ENCODE measurements at regions of chr6 and their contacts with region 1.

Region 1: DNA sequence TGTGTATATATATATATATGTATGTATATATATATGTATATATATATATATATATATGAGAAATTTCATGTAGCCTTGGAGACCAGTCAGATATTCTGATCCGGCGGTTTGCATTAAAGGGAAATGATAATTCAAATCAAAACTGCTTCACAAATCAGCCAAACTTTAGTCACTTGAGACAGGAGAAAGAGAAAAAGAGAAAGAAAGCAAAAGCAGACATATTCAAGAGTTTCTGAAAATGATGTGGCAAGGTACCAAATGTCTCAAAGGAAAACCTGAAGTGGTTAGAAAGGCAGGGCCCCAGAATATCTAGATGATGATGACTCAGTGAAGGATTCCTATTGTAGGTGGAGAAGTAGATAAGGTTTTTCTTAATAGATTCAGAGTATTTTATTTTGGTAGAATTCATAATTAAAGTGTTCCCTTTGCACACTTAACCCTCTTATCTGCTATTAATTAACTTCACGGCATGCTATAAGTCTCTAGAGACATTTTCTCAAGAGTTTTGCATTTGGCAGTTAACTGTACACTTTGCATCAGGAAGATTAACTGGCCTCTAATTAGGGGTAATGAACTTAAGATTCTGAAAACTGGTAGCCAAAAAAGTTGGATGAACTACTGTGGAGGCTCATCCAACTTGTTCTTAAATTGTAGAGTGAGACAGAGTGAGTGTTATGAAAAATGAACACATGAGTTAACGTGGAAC is 50.1 kb upstream of the ASF1A start:
- DNase-seq: no peak
- H3K4me3 ChIP-seq: no peak overlapping the region
- H3K4me3 Mint-ChIP-seq: no peak overlapping the region
- H3K27ac ChIP-seq: no peak overlapping the region
- H3K27ac Mint-ChIP-seq: peak overlapping the region in 3 of 7 donors; percentile 2 to 49 (median 36)
- H3K4me1 ChIP-seq: peaks cover 21% of the 10 kb centered on the region
- H3K4me1 Mint-ChIP-seq: peaks cover 18 to 27% (median 23%) of the 10 kb centered on the region in 4 donors
- H3K27me3 ChIP-seq: no peaks in the 10 kb centered on the region
- H3K27me3 Mint-ChIP-seq: no peaks in the 10 kb centered on the region

Region 2: DNA sequence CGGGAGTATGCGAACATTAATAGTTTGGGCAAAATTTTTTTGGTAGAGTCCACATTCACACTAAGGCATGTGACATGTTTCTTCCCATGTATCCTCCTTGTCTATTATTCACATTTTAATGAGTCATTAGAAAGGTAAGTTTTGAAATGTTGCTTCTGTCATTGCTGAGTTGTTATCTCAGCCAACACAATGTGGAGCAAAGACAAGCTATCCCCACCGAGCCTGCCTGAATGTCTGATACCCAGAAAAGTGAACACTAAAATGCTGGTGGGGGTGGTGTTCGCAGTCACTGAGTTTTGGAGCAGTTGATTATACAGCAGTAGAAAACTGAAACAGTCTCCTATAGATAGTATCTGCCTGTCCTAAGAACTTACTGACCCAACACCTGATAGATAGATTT is 18.2 kb before region 1 on chr6:
- CTCF ChIA-PET with region 1: interaction called, 10 read pairs
- POLR2A ChIA-PET with region 1: no interaction called
- intact Hi-C with region 1: no loop called
- DNase-seq: no peak
- H3K4me3 ChIP-seq: no peak overlapping the region
- H3K4me3 Mint-ChIP-seq: no peak overlapping the region
- H3K27ac ChIP-seq: no peak overlapping the region
- H3K27ac Mint-ChIP-seq: no peak overlapping the region
- H3K4me1 ChIP-seq: no peaks in the 10 kb centered on the region
- H3K4me1 Mint-ChIP-seq: peaks cover 0 to under 1% (median under 1%) of the 10 kb centered on the region in 4 donors
- H3K27me3 ChIP-seq: no peaks in the 10 kb centered on the region
- H3K27me3 Mint-ChIP-seq: no peaks in the 10 kb centered on the region

Measured in CD4-positive, alpha-beta memory T cell (primary cell).